ENCODE measurements at regions of chr13 and their contacts with region 1.

Region 1: GRCh38 chr13:48334534-48335127 is 31.1 kb downstream of the RB1 start:
- DNase-seq: peak; percentile 56
- H3K4me3 Mint-ChIP-seq: no peak overlapping the region
- H3K27ac Mint-ChIP-seq: peak overlapping the region; percentile 63
- H3K4me1 Mint-ChIP-seq: peaks cover 20% of the 10 kb centered on the region
- H3K27me3 Mint-ChIP-seq: no peaks in the 10 kb centered on the region
- CTCF ChIP-seq: peak; percentile 48

Region 2: GRCh38 chr13:48126944-48127830 is 207.4 kb before region 1 on chr13:
- CTCF ChIA-PET with region 1: interaction called, 4 read pairs
- POLR2A ChIA-PET with region 1: interaction called, 3 read pairs
- intact Hi-C with region 1: loop called (anchors 2 kb)
- DNase-seq: peak; percentile 82
- H3K4me3 Mint-ChIP-seq: no peak overlapping the region
- H3K27ac Mint-ChIP-seq: peak overlapping the region; percentile 64
- H3K4me1 Mint-ChIP-seq: peaks cover 21% of the 10 kb centered on the region
- H3K27me3 Mint-ChIP-seq: no peaks in the 10 kb centered on the region
- CTCF ChIP-seq: peak; percentile 64

Region 3: DNA sequence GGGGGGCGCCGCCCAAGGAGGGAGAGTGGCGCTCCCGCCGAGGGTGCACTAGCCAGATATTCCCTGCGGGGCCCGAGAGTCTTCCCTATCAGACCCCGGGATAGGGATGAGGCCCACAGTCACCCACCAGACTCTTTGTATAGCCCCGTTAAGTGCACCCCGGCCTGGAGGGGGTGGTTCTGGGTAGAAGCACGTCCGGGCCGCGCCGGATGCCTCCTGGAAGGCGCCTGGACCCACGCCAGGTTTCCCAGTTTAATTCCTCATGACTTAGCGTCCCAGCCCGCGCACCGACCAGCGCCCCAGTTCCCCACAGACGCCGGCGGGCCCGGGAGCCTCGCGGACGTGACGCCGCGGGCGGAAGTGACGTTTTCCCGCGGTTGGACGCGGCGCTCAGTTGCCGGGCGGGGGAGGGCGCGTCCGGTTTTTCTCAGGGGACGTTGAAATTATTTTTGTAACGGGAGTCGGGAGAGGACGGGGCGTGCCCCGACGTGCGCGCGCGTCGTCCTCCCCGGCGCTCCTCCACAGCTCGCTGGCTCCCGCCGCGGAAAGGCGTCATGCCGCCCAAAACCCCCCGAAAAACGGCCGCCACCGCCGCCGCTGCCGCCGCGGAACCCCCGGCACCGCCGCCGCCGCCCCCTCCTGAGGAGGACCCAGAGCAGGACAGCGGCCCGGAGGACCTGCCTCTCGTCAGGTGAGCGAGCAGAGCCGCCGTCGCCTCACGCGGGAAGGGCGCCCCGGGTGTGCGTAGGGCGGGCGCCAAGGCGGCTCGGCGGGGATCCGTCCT is 31.1 kb before region 1 on chr13 and contains the start of gene RB1:
- CTCF ChIA-PET with region 1: interaction called, 3 read pairs
- POLR2A ChIA-PET with region 1: interaction called, 23 read pairs
- intact Hi-C with region 1: no loop called
- DNase-seq: peak; percentile 92
- H3K4me3 Mint-ChIP-seq: peak within 1 kb of the TSS; percentile 86
- H3K27ac Mint-ChIP-seq: peak within 1 kb of the TSS; percentile 97
- H3K4me1 Mint-ChIP-seq: peaks cover 16% of the 10 kb centered on the region
- H3K27me3 Mint-ChIP-seq: no peaks in the 10 kb centered on the region
- CTCF ChIP-seq: no peak
- total RNA-seq, gene RB1: 40.7 and 43.4 TPM in 2 replicates

Region 4: DNA sequence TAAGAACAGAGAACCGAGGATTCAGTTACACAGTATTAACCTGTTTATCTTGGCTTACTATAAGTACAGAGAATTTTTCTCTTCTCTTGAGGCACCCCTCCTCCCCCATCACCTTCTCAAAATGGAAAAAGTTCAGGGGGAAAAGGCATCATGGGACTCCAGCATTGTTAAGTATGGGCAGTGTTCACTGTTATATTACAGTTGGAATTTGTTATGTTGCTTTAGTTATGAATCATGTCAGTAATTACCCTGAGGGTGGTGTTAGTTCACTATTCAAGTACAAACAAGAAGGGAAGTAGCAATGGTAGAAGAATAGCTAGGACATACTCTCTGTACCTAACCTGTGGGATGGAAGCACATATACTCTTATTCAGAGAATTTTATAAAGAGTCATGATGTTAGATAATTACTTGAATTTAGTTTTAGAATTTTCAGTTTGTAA is 66.2 kb after region 1 on chr13:
- CTCF ChIA-PET with region 1: no interaction called
- POLR2A ChIA-PET with region 1: interaction called, 4 read pairs
- intact Hi-C with region 1: loop called (anchors 2 kb)
- DNase-seq: peak; percentile 90
- H3K4me3 Mint-ChIP-seq: peak overlapping the region; percentile 50
- H3K27ac Mint-ChIP-seq: peak overlapping the region; percentile 94
- H3K4me1 Mint-ChIP-seq: peaks cover 42% of the 10 kb centered on the region
- H3K27me3 Mint-ChIP-seq: no peaks in the 10 kb centered on the region
- CTCF ChIP-seq: peak; percentile 8

Region 5: DNA sequence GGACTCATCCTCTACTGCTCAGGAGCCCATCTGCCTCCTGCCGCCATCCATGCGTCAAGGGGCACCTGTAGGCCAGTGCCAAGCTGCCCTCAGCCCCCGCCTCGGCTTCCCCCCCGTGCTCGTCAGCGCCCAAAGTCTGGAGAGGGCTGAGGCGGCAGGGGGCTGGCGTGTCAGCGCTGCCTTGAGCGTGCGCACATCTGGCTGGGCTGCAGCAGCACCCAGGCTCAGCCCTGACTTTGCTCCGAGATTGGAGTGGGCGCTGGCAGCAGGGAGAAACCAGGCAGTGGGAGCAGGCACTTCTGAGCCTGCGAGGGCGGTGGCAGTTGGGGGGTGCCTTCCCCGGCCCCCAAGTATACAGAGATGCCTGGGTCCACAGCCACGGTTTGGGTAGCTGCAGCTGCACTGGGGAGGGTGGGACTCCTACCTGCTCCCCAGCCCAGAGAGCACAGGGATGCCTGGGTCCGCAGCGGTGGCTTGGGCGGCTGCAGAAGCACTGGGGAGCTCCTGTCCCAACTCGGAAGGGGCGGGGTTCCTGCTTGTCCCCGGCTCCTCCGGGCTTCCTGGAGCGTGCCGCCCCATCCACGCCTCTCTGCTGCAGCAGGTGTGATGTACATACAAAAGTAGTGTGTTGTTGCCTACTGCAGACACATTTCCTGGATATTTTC is 123.1 kb after region 1 on chr13:
- CTCF ChIA-PET with region 1: no interaction called
- POLR2A ChIA-PET with region 1: no interaction called
- intact Hi-C with region 1: no loop called
- DNase-seq: no peak
- H3K4me3 Mint-ChIP-seq: no peak overlapping the region
- H3K27ac Mint-ChIP-seq: no peak overlapping the region
- H3K4me1 Mint-ChIP-seq: no peaks in the 10 kb centered on the region
- H3K27me3 Mint-ChIP-seq: no peaks in the 10 kb centered on the region
- CTCF ChIP-seq: no peak

Region 6: GRCh38 chr13:48571126-48571913 is 236.7 kb after region 1 on chr13:
- CTCF ChIA-PET with region 1: interaction called, 16 read pairs
- POLR2A ChIA-PET with region 1: interaction called, 3 read pairs
- intact Hi-C with region 1: no loop called
- DNase-seq: no peak
- H3K4me3 Mint-ChIP-seq: no peak overlapping the region
- H3K27ac Mint-ChIP-seq: no peak overlapping the region
- H3K4me1 Mint-ChIP-seq: peaks cover 17% of the 10 kb centered on the region
- H3K27me3 Mint-ChIP-seq: no peaks in the 10 kb centered on the region
- CTCF ChIP-seq: no peak

Region 7: GRCh38 chr13:48769107-48769704 is 434.6 kb after region 1 on chr13:
- CTCF ChIA-PET with region 1: interaction called, 4 read pairs
- POLR2A ChIA-PET with region 1: interaction called, 4 read pairs
- intact Hi-C with region 1: loop called (anchors 1 kb)
- DNase-seq: peak; percentile 90
- H3K4me3 Mint-ChIP-seq: no peak overlapping the region
- H3K27ac Mint-ChIP-seq: no peak overlapping the region
- H3K4me1 Mint-ChIP-seq: peaks cover 7% of the 10 kb centered on the region
- H3K27me3 Mint-ChIP-seq: no peaks in the 10 kb centered on the region
- CTCF ChIP-seq: peak; percentile 100

Measured in MCF 10A (cell line).